Activated T-helper 1 cell treated with anti-CD3 and anti-CD28 coated beads, Interleukin-12 subunit alpha, Interleukin-12 subunit beta, Interleukin-2, Interleukin-4 antibody, amounts not matched to agents 30 ng/mL and 10 ng/mL and 1 ng/mL, durations not matched to agents 14 hours and 24 hours and 36 hours (primary cell): ENCODE measurements at regions of chr14 and their contacts with region 1.

Region 1: DNA sequence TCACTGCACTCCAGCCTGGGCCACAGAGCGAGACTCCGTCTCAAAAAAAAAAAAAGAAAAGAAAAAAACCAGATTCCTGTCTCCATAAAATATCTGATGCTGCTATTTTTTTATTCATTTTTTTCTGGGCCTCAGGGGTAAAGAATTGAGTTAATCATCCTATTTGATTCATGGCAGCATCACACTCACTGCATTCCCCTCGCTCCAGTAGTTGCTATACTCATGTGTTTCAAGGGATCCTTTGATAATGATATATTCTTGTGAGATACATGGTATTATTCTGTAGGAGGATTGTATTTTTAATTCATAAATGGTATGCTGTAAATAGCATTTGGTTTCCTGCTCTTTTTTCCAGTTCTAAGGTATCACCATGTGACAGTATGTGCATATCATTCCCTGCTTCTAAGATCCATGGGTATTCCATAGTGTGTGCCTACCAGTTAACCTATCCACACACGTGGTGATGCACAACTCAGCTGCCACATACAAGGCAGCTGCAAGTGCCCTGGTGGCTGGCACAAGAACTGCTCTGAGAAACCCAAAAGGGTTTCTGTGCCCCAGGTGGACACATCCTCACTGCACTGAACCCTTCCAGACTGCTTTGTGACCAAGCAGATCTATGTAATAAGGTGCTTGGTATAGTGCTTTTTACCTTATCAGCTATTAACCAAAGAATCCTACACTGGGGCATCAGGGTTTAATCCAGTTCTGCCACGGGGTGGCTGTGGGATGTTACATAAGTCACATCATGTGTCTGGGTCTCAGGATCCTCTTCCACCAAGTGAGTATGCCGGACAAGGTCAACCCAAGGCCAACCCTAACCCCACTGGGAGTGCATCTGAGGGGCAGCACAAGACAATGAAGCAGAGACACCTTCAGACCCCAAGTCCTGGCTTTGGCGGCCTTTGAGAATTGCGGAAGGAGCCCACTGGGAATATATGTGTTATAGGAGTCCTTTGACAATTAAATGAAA is 74.6 kb downstream of the ZFP36L1 start:
- DNase-seq: no peak
- H3K4me3 Mint-ChIP-seq: no peak overlapping the region
- H3K27ac Mint-ChIP-seq: no peak overlapping the region
- H3K4me1 Mint-ChIP-seq: peaks cover 56% of the 10 kb centered on the region
- H3K27me3 Mint-ChIP-seq: peaks cover 2% of the 10 kb centered on the region

Region 2: GRCh38 chr14:68482772-68483395 is 235.4 kb before region 1 on chr14:
- intact Hi-C with region 1: loop called (anchors 5 kb)
- DNase-seq: no peak
- H3K4me3 Mint-ChIP-seq: no peak overlapping the region
- H3K27ac Mint-ChIP-seq: peak overlapping the region; percentile 71
- H3K4me1 Mint-ChIP-seq: peaks cover 34% of the 10 kb centered on the region
- H3K27me3 Mint-ChIP-seq: peaks cover 2% of the 10 kb centered on the region

Region 3: DNA sequence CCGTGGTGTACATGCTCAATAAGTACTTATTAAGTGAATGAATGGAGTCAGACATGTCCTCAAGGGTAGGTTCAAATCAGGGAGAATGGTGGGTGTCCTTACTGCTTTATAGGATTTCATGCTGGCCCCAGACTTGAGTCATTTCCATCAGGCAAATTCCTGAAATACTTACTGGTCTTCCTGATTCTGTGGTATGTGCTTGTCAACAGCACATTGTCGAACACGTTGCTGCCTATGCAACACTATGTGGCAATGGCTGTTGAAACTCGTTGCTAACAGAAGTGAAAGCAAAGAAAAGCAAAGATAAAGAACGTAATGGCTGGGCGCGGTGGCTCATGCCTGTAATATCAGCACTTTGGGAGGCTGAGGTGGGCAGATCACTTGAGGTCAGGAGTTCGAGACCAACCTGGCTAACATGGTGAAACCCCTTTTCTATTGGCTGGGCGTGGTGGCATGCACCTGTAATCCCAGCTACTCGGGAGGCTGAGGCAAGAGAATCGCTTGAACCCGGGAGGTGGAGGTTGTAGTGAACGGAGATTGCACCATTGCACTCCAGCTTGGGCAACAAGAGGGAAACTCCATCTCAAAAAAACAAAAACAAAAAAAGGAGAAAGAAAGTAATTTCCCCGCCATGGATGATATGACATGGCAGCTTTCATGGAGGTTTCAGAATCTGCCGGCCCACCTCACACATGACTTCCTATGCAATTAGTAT is 140.3 kb before region 1 on chr14:
- intact Hi-C with region 1: no loop called
- DNase-seq: no peak
- H3K4me3 Mint-ChIP-seq: no peak overlapping the region
- H3K27ac Mint-ChIP-seq: no peak overlapping the region
- H3K4me1 Mint-ChIP-seq: no peaks in the 10 kb centered on the region
- H3K27me3 Mint-ChIP-seq: peaks cover 4% of the 10 kb centered on the region

Region 4: DNA sequence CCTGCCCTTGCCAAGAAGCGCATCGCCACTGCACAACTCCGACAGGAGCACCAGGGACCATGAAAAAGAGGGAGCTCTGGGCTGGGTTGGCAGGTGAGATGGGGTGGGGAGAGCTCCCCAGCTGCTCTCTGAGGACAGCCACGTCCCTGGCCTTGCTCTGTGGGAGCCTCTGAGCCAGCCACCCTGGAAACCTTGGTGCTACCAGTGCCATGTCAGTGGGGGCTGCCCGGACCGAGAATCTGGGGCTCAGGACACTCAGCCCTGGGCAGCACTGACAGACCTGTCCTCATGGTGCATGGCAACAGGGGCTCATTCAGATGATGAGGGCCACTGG is 60.3 kb before region 1 on chr14:
- intact Hi-C with region 1: no loop called
- DNase-seq: no peak
- H3K4me3 Mint-ChIP-seq: no peak overlapping the region
- H3K27ac Mint-ChIP-seq: no peak overlapping the region
- H3K4me1 Mint-ChIP-seq: peaks cover 21% of the 10 kb centered on the region
- H3K27me3 Mint-ChIP-seq: peaks cover 4% of the 10 kb centered on the region

Region 5: DNA sequence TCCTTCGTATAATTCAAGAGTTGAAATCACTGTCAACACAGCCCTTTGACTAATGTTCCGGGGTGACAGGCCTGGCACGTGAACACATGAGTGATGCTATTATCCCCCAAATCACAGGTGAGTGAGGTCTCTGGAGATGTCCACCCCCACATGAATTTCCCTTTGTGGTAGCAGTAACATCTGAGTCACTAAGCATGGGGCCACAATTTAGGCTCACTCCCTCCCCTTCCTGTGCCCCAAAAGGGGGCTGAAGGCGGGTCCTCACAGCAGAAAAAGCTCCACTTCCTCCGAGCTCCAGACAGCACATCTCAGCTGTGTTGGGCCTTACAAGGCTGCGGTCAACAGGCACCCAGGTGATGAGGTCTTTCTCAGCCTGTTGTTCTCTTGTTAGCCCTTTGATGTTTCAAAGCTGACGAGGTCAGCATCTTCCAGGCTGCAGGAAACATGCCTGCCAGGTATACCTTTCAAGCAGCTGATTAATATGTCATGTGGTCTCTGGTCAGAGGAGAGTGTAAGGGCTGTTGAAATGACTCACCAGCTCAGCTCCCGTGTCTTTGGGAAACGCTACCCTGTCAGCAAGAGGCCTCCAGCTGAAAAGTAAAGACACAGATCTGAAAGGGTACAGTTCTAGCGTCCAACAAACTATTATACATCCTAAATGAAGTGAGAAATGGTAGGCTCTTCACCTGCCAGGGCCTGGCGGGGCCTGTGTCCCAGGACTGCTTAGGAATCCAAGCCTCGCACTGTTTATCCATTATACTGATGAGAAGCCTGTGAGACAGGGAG is 32.7 kb before region 1 on chr14:
- intact Hi-C with region 1: loop called (anchors 1 kb)
- DNase-seq: peak; percentile 71
- H3K4me3 Mint-ChIP-seq: peak overlapping the region; percentile 45
- H3K27ac Mint-ChIP-seq: peak overlapping the region; percentile 86
- H3K4me1 Mint-ChIP-seq: peaks cover 61% of the 10 kb centered on the region
- H3K27me3 Mint-ChIP-seq: peaks cover 2% of the 10 kb centered on the region

Region 6: GRCh38 chr14:68780358-68781160 is 62.2 kb after region 1 on chr14:
- intact Hi-C with region 1: loop called (anchors 1 kb)
- DNase-seq: no peak
- H3K4me3 Mint-ChIP-seq: peak overlapping the region; percentile 78
- H3K27ac Mint-ChIP-seq: peak overlapping the region; percentile 93
- H3K4me1 Mint-ChIP-seq: peaks cover 72% of the 10 kb centered on the region
- H3K27me3 Mint-ChIP-seq: no peaks in the 10 kb centered on the region